Activated T-helper 1 cell treated with anti-CD3 and anti-CD28 coated beads, Interleukin-12 subunit alpha, Interleukin-12 subunit beta, Interleukin-2, Interleukin-4 antibody, amounts not matched to agents 30 ng/mL and 10 ng/mL and 1 ng/mL, durations not matched to agents 14 hours and 24 hours and 36 hours (primary cell): ENCODE measurements at regions of chr18 and their contacts with region 1.

Region 1: GRCh38 chr18:27954226-27954625 is 222.7 kb downstream of the CDH2 start:
- DNase-seq: no peak
- H3K4me3 Mint-ChIP-seq: no peak overlapping the region
- H3K27ac Mint-ChIP-seq: no peak overlapping the region
- H3K4me1 Mint-ChIP-seq: no peaks in the 10 kb centered on the region
- H3K27me3 Mint-ChIP-seq: no peaks in the 10 kb centered on the region

Region 2: GRCh38 chr18:29226201-29226600 is 1272.0 kb after region 1 on chr18:
- intact Hi-C with region 1: loop called (anchors 5 kb)
- DNase-seq: no peak
- H3K4me3 Mint-ChIP-seq: no peak overlapping the region
- H3K27ac Mint-ChIP-seq: no peak overlapping the region
- H3K4me1 Mint-ChIP-seq: no peaks in the 10 kb centered on the region
- H3K27me3 Mint-ChIP-seq: no peaks in the 10 kb centered on the region